HEK293 (cell line): ENCODE measurements at regions of chrX and their contacts with region 1.

Region 1: GRCh38 chrX:25144043-25144940 is 128.5 kb upstream of the ARX start:
- H3K4me3 ChIP-seq: no peak overlapping the region
- H3K27ac ChIP-seq: no peak overlapping the region
- H3K4me1 ChIP-seq: no peaks in the 10 kb centered on the region
- CTCF ChIP-seq: peak; percentile 45; the same call in 1 of the 2 replicates

Region 2: DNA sequence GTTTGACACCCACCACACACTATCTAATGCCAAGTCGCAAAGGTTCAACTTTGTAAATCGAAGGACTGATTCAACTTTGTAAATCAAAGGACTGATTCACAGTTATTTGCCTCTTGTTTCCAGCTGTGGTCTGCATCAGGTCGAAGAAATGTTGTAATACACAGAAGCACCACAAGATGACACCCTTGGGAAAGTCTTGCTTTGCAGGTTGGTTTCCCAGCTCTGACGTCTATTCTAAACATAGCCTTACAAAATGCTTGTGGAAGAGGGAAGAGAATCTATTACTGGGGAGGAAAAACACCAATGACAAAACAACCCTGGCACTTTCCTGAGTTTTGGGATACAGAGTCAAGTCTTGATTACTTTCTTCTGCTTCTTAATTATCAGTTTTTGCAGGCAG is 748.5 kb before region 1 on chrX:
- CTCF ChIA-PET with region 1: interaction called, 23 read pairs
- POLR2A ChIA-PET with region 1: no interaction called
- H3K4me3 ChIP-seq: no peak overlapping the region
- H3K27ac ChIP-seq: no peak overlapping the region
- H3K4me1 ChIP-seq: peaks cover 14% of the 10 kb centered on the region
- CTCF ChIP-seq: peak; percentile 71

Region 3: DNA sequence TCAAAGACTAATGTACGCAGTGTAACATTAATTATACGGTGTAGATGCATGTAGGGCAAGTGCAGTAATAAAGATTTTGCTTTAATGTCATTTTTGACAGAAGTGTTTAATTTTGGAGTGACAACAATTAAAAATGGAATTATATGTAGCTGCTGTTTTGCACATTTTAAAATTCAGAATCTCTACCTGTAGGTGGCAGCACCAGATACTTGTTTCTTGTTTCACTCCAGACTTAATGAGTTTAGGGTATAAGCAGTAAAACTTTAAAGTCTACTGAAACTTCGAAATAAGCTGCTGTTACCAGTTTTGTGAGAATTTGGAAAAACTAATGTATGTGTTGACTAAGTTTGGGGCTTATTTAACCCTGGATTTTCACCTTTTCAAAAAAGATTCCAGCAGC is 305.7 kb before region 1 on chrX:
- CTCF ChIA-PET with region 1: interaction called, 60 read pairs
- POLR2A ChIA-PET with region 1: no interaction called
- H3K4me3 ChIP-seq: no peak overlapping the region
- H3K27ac ChIP-seq: no peak overlapping the region
- H3K4me1 ChIP-seq: no peaks in the 10 kb centered on the region; the same call in 1 of the 2 replicates
- CTCF ChIP-seq: no peak

Region 4: GRCh38 chrX:25131055-25131454 is 13.2 kb before region 1 on chrX:
- CTCF ChIA-PET with region 1: interaction called, 25 read pairs
- POLR2A ChIA-PET with region 1: no interaction called
- H3K4me3 ChIP-seq: no peak overlapping the region
- H3K27ac ChIP-seq: no peak overlapping the region
- H3K4me1 ChIP-seq: no peaks in the 10 kb centered on the region
- CTCF ChIP-seq: no peak

Region 5: DNA sequence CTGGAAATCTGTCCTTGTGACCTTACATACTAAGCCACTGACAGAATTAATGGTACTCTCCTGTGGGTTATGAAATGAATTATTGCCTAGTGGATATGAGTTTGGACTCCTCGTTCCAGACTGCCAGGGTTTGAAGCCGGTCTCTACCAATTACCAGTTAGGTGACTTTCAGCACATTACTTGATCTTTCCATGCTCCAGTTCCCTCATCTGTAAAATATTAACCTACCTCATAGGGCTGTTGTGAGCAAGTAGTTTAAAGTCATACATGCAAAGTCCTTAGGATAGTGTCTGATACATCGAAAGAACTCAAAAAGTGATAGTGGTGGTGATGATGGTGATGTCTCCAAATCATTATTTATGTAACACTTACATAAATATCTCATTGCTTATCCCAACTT is 245.0 kb after region 1 on chrX:
- CTCF ChIA-PET with region 1: no interaction called
- POLR2A ChIA-PET with region 1: no interaction called
- H3K4me3 ChIP-seq: no peak overlapping the region
- H3K27ac ChIP-seq: no peak overlapping the region
- H3K4me1 ChIP-seq: no peaks in the 10 kb centered on the region
- CTCF ChIP-seq: no peak